Caco-2 (cell line): ENCODE measurements at regions of chr3 and their contacts with region 1.

Region 1: GRCh38 chr3:137692803-137693431 is 71.2 kb upstream of the SOX14 start:
- DNase-seq: peak; percentile 55 to 65
- H3K4me3 ChIP-seq: no peak overlapping the region
- H3K4me3 Mint-ChIP-seq: no peak overlapping the region
- H3K27ac Mint-ChIP-seq: no peak overlapping the region
- H3K4me1 ChIP-seq: no peaks in the 10 kb centered on the region
- H3K4me1 Mint-ChIP-seq: no peaks in the 10 kb centered on the region
- H3K27me3 ChIP-seq: no peaks in the 10 kb centered on the region
- H3K27me3 Mint-ChIP-seq: peaks cover 13% of the 10 kb centered on the region
- CTCF ChIP-seq: peak; percentile 77 to 82

Region 2: DNA sequence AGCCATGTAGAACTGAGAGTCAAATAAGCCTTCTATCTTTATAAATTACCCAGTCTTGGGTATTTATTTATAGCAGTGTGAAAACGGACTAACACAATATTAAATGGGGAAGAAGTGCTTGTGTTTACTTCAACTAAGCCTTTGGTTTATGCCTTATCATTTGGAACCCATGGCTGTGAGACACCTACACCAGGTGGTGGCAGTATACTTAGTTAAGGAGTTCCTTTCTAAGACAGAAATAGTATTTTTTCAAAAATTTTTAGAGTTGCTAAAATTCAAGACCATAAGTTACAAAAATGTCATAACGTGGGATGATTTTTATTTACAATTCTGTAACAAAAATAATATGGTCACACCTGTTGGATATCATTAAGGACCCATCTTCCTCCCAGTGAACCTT is 283.3 kb before region 1 on chr3:
- CTCF ChIA-PET with region 1: no interaction called
- POLR2A ChIA-PET with region 1: no interaction called
- intact Hi-C with region 1: loop called (anchors 1 kb)
- DNase-seq: no peak
- H3K4me3 ChIP-seq: no peak overlapping the region
- H3K4me3 Mint-ChIP-seq: no peak overlapping the region
- H3K27ac Mint-ChIP-seq: no peak overlapping the region
- H3K4me1 ChIP-seq: no peaks in the 10 kb centered on the region
- H3K4me1 Mint-ChIP-seq: no peaks in the 10 kb centered on the region
- H3K27me3 ChIP-seq: no peaks in the 10 kb centered on the region; the same call in 1 of the 2 replicates
- H3K27me3 Mint-ChIP-seq: peaks cover 7% of the 10 kb centered on the region
- CTCF ChIP-seq: peak in 1 of 2 experiments; percentile 18